ENCODE measurements at regions of chr12 and their contacts with region 1.

Region 1: DNA sequence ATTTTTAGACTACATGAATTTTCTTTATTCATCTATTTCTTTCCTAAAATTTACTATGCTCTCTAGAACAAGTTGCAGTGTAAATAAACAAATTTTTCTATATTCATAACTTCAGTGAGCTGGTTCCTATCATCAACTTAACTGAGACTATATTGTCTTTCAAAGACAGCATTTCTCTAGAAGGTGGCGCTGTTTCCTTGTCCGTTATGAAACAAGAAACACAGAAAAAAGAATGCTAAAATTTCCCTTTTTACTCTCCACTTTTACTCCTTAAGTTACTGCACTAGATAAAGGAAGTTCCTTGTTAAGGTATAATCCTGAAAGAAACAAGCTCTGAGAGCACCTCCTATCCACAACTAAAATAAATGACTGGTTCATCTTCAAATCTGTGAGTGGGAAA is 8.2 kb upstream of the CLEC2A start:
- DNase-seq: no peak
- H3K4me3 Mint-ChIP-seq: no peak overlapping the region
- H3K27ac Mint-ChIP-seq: no peak overlapping the region
- H3K4me1 Mint-ChIP-seq: peaks cover 22% of the 10 kb centered on the region
- H3K27me3 Mint-ChIP-seq: peaks cover 19% of the 10 kb centered on the region

Region 2: GRCh38 chr12:9925708-9926393 is 14.5 kb before region 1 on chr12:
- intact Hi-C with region 1: loop called (anchors 2 kb)
- DNase-seq: no peak
- H3K4me3 Mint-ChIP-seq: peak overlapping the region; percentile 66
- H3K27ac Mint-ChIP-seq: no peak overlapping the region
- H3K4me1 Mint-ChIP-seq: peaks cover 22% of the 10 kb centered on the region
- H3K27me3 Mint-ChIP-seq: peaks cover 13% of the 10 kb centered on the region

Region 3: DNA sequence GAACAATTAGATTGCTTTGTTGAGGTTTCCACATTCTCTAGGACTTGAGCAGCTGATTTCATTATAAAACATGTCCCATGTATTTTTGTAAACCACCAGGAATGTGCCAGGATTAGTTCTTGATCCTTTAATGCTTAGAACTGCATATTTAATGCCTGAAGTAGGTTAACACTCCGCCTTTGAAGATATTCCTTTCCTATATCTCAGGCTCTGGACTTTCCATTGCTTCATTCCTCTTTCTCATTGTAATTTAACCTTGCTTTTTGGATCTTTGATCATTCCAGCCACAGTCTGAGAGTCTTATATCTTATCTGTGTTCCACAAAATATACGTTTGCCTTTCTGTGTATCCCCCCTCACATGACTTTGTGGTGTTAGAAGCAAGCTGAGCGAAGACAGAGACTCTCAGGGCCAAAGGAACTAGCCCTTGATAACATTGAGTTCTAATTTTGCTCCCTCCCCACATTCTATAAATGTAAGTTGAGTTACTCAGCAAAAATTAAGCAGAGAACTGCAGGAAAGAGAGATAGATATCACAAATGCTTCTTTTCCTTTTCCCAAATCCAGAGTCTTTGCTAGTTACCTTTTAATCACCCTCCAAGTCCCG is 60.9 kb after region 1 on chr12:
- intact Hi-C with region 1: loop called (anchors 5 kb)
- DNase-seq: no peak
- H3K4me3 Mint-ChIP-seq: no peak overlapping the region
- H3K27ac Mint-ChIP-seq: no peak overlapping the region
- H3K4me1 Mint-ChIP-seq: no peaks in the 10 kb centered on the region
- H3K27me3 Mint-ChIP-seq: peaks cover 33% of the 10 kb centered on the region

Region 4: GRCh38 chr12:10140001-10140400 is 199.6 kb after region 1 on chr12:
- intact Hi-C with region 1: loop called (anchors 1 kb)
- DNase-seq: peak; percentile 25
- H3K4me3 Mint-ChIP-seq: no peak overlapping the region
- H3K27ac Mint-ChIP-seq: no peak overlapping the region
- H3K4me1 Mint-ChIP-seq: no peaks in the 10 kb centered on the region
- H3K27me3 Mint-ChIP-seq: peaks cover 46% of the 10 kb centered on the region

Measured in activated T-helper 1 cell treated with anti-CD3 and anti-CD28 coated beads, Interleukin-12 subunit alpha, Interleukin-12 subunit beta, Interleukin-2, Interleukin-4 antibody, amounts not matched to agents 30 ng/mL and 10 ng/mL and 1 ng/mL, durations not matched to agents 14 hours and 24 hours and 36 hours (primary cell).